ENCODE measurements at regions of chr19 and their contacts with region 1.

Region 1: GRCh38 chr19:16435238-16435917 is 36.4 kb downstream of the EPS15L1 start:
- DNase-seq: peak; percentile 67 to 80
- ATAC-seq: peak; percentile 78 to 84 (median 81)
- H3K4me3 ChIP-seq: no peak overlapping the region
- H3K27ac ChIP-seq: peak overlapping the region; percentile 85
- H3K4me1 ChIP-seq: peaks cover 20% of the 10 kb centered on the region
- H3K27me3 ChIP-seq: no peaks in the 10 kb centered on the region
- CTCF ChIP-seq: no peak

Region 2: DNA sequence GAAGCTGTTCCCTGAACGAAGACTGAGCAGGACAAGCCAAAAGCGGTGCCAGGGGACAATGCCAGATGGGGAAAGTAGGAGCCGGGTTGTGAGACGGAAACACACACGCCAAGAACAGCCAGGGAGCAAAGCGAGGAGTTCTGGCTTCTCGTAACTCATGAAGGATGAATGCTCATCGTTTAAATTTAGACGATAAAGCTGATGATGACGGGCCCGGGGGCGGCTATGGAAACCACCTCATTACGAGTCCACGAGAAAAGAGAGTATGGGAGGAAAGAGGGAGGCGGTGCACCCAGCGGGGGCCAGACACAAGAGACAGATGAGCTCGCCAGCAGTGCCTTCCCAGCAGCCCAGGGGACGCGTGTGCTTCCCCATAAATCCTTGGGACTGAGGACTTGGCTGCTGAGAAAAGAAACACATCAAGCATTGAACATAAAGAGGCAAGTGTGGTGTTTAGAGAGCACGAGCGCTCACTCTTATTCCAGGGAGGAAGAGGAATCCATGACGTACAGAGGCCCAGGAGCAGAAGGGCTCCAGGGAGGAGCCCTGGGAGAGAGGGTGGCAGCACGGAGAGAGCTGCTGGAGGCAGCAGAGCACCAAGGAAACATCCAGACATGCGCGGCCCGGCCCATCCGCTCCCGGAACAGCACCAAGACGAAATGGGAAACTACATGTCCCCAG is 34.3 kb before region 1 on chr19:
- intact Hi-C with region 1: no loop called
- DNase-seq: peak; percentile 67 to 87
- ATAC-seq: peak; percentile 81 to 89 (median 85)
- H3K4me3 ChIP-seq: no peak overlapping the region
- H3K27ac ChIP-seq: peak overlapping the region; percentile 76
- H3K4me1 ChIP-seq: peaks cover 15% of the 10 kb centered on the region
- H3K27me3 ChIP-seq: no peaks in the 10 kb centered on the region
- CTCF ChIP-seq: no peak

Region 3: GRCh38 chr19:16482736-16483135 is 47.4 kb after region 1 on chr19:
- intact Hi-C with region 1: loop called in 1 of 2 experiments (anchors 2 kb)
- DNase-seq: no peak
- ATAC-seq: no peak
- H3K4me3 ChIP-seq: no peak overlapping the region
- H3K27ac ChIP-seq: no peak overlapping the region
- H3K4me1 ChIP-seq: no peaks in the 10 kb centered on the region
- H3K27me3 ChIP-seq: no peaks in the 10 kb centered on the region
- CTCF ChIP-seq: no peak